A549 (cell line): ENCODE measurements at regions of chr11 and their contacts with region 1.

Region 1: GRCh38 chr11:120229451-120230424 is 10.2 kb upstream of the POU2F3 start:
- DNase-seq: peak in 1 of 2 experiments; percentile 20
- ATAC-seq: peak in 1 of 2 experiments; percentile 62; a peak in 3 of 6 replicates
- H3K4me3 ChIP-seq: no peak overlapping the region
- H3K27ac ChIP-seq: no peak overlapping the region
- H3K4me1 ChIP-seq: no peaks in the 10 kb centered on the region
- CTCF ChIP-seq: peak; percentile 55
- EP300 ChIP-seq: no peak
- POLR2A ChIP-seq: no peak
- RAD21 ChIP-seq: peak; percentile 61 to 68

Region 2: DNA sequence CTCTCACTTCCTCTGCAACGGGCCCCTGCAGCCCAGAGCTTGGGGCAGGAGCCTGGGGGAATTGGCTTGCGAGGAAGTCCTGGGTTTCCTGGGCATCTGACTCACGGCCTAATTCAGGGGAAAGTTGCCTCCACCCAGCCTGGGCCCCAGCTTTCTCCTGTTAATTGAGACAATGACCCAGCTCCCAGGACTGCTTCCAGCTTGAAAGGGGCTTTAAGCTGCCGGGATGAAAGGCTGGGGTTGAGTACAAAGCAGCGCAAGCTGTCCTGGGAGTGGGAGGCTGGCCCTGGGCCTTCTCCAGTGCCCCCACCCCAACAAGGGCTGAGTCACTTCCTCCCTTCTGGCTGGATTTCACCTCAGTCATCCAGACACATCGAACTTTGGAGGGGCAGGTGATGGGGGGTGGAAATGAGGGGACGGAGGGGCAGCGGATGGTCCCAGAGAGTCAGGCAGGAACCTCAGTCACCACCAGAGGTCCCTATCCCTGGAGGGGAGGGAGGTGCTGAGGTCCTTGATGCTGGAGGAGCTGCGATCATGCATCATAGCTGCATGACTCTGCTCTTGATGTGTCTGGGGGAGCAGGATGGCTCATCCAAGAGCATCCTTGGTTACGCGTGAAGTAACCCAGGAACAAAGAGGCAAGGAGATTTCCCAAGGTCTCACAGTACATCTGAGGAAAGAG is 49.0 kb before region 1 on chr11:
- CTCF ChIA-PET with region 1: interaction called, 245 read pairs
- POLR2A ChIA-PET with region 1: no interaction called
- DNase-seq: no peak
- ATAC-seq: peak in 1 of 2 experiments; percentile 40; a peak in 2 of 6 replicates
- H3K4me3 ChIP-seq: no peak overlapping the region
- H3K27ac ChIP-seq: no peak overlapping the region
- H3K4me1 ChIP-seq: no peaks in the 10 kb centered on the region
- CTCF ChIP-seq: no peak
- EP300 ChIP-seq: no peak
- POLR2A ChIP-seq: no peak
- RAD21 ChIP-seq: no peak

Region 3: GRCh38 chr11:120197251-120197891 is 32.4 kb before region 1 on chr11:
- CTCF ChIA-PET with region 1: interaction called, 24 read pairs
- POLR2A ChIA-PET with region 1: no interaction called
- DNase-seq: no peak
- ATAC-seq: no peak
- H3K4me3 ChIP-seq: no peak overlapping the region
- H3K27ac ChIP-seq: no peak overlapping the region
- H3K4me1 ChIP-seq: no peaks in the 10 kb centered on the region
- CTCF ChIP-seq: no peak
- EP300 ChIP-seq: no peak
- POLR2A ChIP-seq: no peak
- RAD21 ChIP-seq: no peak

Region 4: GRCh38 chr11:120215634-120216033 is 14.1 kb before region 1 on chr11:
- CTCF ChIA-PET with region 1: interaction called, 10 read pairs
- POLR2A ChIA-PET with region 1: no interaction called
- DNase-seq: no peak
- ATAC-seq: no peak
- H3K4me3 ChIP-seq: no peak overlapping the region
- H3K27ac ChIP-seq: no peak overlapping the region
- H3K4me1 ChIP-seq: 0 out of 3 replicates have a peak, but pooled peaks cover 7% of the 10 kb centered on the region
- CTCF ChIP-seq: no peak
- EP300 ChIP-seq: no peak
- POLR2A ChIP-seq: no peak
- RAD21 ChIP-seq: no peak

Region 5: GRCh38 chr11:120248551-120249278 is 19.0 kb after region 1 on chr11:
- CTCF ChIA-PET with region 1: interaction called, 23 read pairs
- POLR2A ChIA-PET with region 1: no interaction called
- DNase-seq: no peak
- ATAC-seq: no peak
- H3K4me3 ChIP-seq: no peak overlapping the region
- H3K27ac ChIP-seq: no peak overlapping the region
- H3K4me1 ChIP-seq: no peaks in the 10 kb centered on the region
- CTCF ChIP-seq: no peak
- EP300 ChIP-seq: no peak
- POLR2A ChIP-seq: no peak
- RAD21 ChIP-seq: no peak